Endothelial cell of umbilical vein (primary cell): ENCODE measurements at regions of chr7 and their contacts with region 1.

Region 1: DNA sequence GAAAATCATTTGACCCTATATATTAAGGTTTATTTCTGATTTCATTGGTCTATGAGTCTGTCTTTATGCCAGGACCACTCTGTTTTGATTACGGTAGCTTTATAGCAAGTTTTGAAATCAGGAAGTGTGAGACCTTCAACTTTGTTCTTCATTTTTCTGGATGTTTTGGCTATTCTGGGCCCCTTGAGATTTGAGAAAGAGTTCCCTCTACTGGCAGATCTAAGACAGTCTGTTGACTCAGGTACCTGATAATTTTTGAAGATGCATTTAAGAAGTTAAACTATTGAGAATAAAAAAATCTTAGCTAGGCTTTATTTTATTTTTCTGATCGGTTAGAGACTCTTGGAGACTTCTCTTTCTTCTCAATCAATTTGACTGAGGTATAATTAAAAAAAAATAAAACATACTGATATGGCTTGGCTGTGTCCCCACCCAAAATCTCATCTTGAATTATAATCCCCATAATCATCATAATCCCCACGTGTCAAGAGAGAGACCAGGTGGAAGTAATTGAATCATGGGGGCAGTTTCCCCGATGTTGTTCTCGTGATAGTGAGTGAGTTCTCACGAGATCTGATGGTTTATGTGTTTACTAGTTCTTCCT is 209.2 kb downstream of the SNX10 start:
- DNase-seq: peak; percentile 52
- H3K4me3 ChIP-seq: no peak overlapping the region
- H3K27ac ChIP-seq: no peak overlapping the region
- H3K4me1 ChIP-seq: no peaks in the 10 kb centered on the region
- H3K27me3 ChIP-seq: peaks cover 2 to 3% of the 10 kb centered on the region in 2 experiments
- CTCF ChIP-seq: peak; percentile 25 to 29
- POLR2A ChIP-seq: no peak

Region 2: GRCh38 chr7:26200444-26201246 is 300.2 kb before region 1 on chr7 and contains the start of gene HNRNPA2B1:
- CTCF ChIA-PET with region 1: no interaction called
- POLR2A ChIA-PET with region 1: no interaction called
- dilution Hi-C with region 1: no loop called
- intact Hi-C with region 1: loop called (anchors 10 kb)
- DNase-seq: peak; percentile 99
- H3K4me3 ChIP-seq: peak within 1 kb of the TSS; percentile 98 to 100 (median 98)
- H3K27ac ChIP-seq: peak within 1 kb of the TSS; percentile 97
- H3K4me1 ChIP-seq: peaks cover 40% of the 10 kb centered on the region
- H3K27me3 ChIP-seq: no peaks in the 10 kb centered on the region
- CTCF ChIP-seq: no peak
- POLR2A ChIP-seq: peak; percentile 100
- total RNA-seq, gene HNRNPA2B1: 703 and 717 TPM in 2 replicates

Region 3: DNA sequence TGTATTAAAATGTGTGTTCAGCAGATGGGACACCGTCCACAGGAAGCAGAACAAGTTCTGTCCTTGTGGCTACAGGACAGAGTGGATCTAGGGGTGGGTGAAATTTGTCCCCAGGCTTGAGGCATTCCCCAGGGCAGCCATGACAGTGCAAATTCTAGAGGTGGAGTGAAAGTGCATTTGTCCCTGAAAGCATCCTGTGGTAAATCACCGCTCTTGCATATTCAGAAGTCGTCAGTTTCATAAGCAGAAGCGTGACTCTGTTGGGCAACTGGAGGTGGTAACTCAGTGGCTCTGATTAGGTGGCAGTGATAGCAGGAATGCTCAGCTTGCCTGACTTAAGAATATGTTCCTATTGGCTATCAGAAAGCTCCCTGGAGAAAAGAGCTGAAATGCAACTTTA is 112.6 kb before region 1 on chr7:
- CTCF ChIA-PET with region 1: interaction called, 10 read pairs
- POLR2A ChIA-PET with region 1: no interaction called
- dilution Hi-C with region 1: no loop called
- intact Hi-C with region 1: no loop called
- DNase-seq: no peak
- H3K4me3 ChIP-seq: no peak overlapping the region
- H3K27ac ChIP-seq: no peak overlapping the region
- H3K4me1 ChIP-seq: no peaks in the 10 kb centered on the region
- H3K27me3 ChIP-seq: peaks cover 19 to 20% of the 10 kb centered on the region in 2 experiments
- CTCF ChIP-seq: no peak
- POLR2A ChIP-seq: no peak

Region 4: GRCh38 chr7:26449175-26450165 is 51.4 kb before region 1 on chr7:
- CTCF ChIA-PET with region 1: interaction called, 9 read pairs
- POLR2A ChIA-PET with region 1: no interaction called
- dilution Hi-C with region 1: no loop called
- intact Hi-C with region 1: loop called (anchors 2 kb)
- DNase-seq: peak; percentile 96
- H3K4me3 ChIP-seq: no peak overlapping the region
- H3K27ac ChIP-seq: peak overlapping the region; percentile 80
- H3K4me1 ChIP-seq: peaks cover 37% of the 10 kb centered on the region
- H3K27me3 ChIP-seq: no peaks in the 10 kb centered on the region
- CTCF ChIP-seq: no peak
- POLR2A ChIP-seq: peak; percentile 54